Activated T-helper 1 cell treated with anti-CD3 and anti-CD28 coated beads, Interleukin-12 subunit alpha, Interleukin-12 subunit beta, Interleukin-2, Interleukin-4 antibody, amounts not matched to agents 30 ng/mL and 10 ng/mL and 1 ng/mL, durations not matched to agents 14 hours and 24 hours and 36 hours (primary cell): ENCODE measurements at regions of chr6 and their contacts with region 1.

Region 1: GRCh38 chr6:49849213-49849907 is 17.0 kb downstream of the CRISP1 start:
- DNase-seq: no peak
- H3K4me3 Mint-ChIP-seq: no peak overlapping the region
- H3K27ac Mint-ChIP-seq: no peak overlapping the region
- H3K4me1 Mint-ChIP-seq: no peaks in the 10 kb centered on the region
- H3K27me3 Mint-ChIP-seq: no peaks in the 10 kb centered on the region

Region 2: GRCh38 chr6:49531774-49532569 is 317.4 kb before region 1 on chr6:
- intact Hi-C with region 1: loop called (anchors 1 kb)
- DNase-seq: no peak
- H3K4me3 Mint-ChIP-seq: no peak overlapping the region
- H3K27ac Mint-ChIP-seq: no peak overlapping the region
- H3K4me1 Mint-ChIP-seq: no peaks in the 10 kb centered on the region
- H3K27me3 Mint-ChIP-seq: peaks cover 15% of the 10 kb centered on the region

Region 3: GRCh38 chr6:49625140-49625539 is 224.2 kb before region 1 on chr6:
- intact Hi-C with region 1: loop called (anchors 1 kb)
- DNase-seq: no peak
- H3K4me3 Mint-ChIP-seq: no peak overlapping the region
- H3K27ac Mint-ChIP-seq: no peak overlapping the region
- H3K4me1 Mint-ChIP-seq: no peaks in the 10 kb centered on the region
- H3K27me3 Mint-ChIP-seq: no peaks in the 10 kb centered on the region

Region 4: GRCh38 chr6:49866485-49866943 is 17.2 kb after region 1 on chr6 and contains the start of gene CRISP1:
- intact Hi-C with region 1: no loop called
- DNase-seq: no peak
- H3K4me3 Mint-ChIP-seq: no peak within 1 kb of the TSS
- H3K27ac Mint-ChIP-seq: no peak within 1 kb of the TSS
- H3K4me1 Mint-ChIP-seq: no peaks in the 10 kb centered on the region
- H3K27me3 Mint-ChIP-seq: no peaks in the 10 kb centered on the region
- total RNA-seq, gene CRISP1: not detected in 2 replicates

Region 5: GRCh38 chr6:50007821-50008220 is 158.5 kb after region 1 on chr6:
- intact Hi-C with region 1: no loop called
- DNase-seq: no peak
- H3K4me3 Mint-ChIP-seq: no peak overlapping the region
- H3K27ac Mint-ChIP-seq: no peak overlapping the region
- H3K4me1 Mint-ChIP-seq: no peaks in the 10 kb centered on the region
- H3K27me3 Mint-ChIP-seq: no peaks in the 10 kb centered on the region